ENCODE measurements at regions of chrX and their contacts with region 1.

Region 1: GRCh38 chrX:49120099-49120498 is 3.4 kb downstream of the GPKOW start:
- DNase-seq: no peak
- H3K4me3 Mint-ChIP-seq: peak overlapping the region; percentile 69
- H3K27ac Mint-ChIP-seq: peak overlapping the region; percentile 71
- H3K4me1 Mint-ChIP-seq: peaks cover 40% of the 10 kb centered on the region
- H3K27me3 Mint-ChIP-seq: no peaks in the 10 kb centered on the region

Region 2: GRCh38 chrX:49079489-49080428 is 40.3 kb before region 1 on chrX and contains the start of gene WDR45:
- intact Hi-C with region 1: loop called (anchors 2 kb)
- DNase-seq: peak; percentile 68
- H3K4me3 Mint-ChIP-seq: peak within 1 kb of the TSS; percentile 99
- H3K27ac Mint-ChIP-seq: peak within 1 kb of the TSS; percentile 93
- H3K4me1 Mint-ChIP-seq: peaks cover 12% of the 10 kb centered on the region
- H3K27me3 Mint-ChIP-seq: no peaks in the 10 kb centered on the region
- total RNA-seq, gene WDR45: 49.1 and 53.0 TPM in 2 replicates

Region 3: GRCh38 chrX:49155900-49156837 is 36.1 kb after region 1 on chrX:
- intact Hi-C with region 1: loop called (anchors 1 kb)
- DNase-seq: peak; percentile 83
- H3K4me3 Mint-ChIP-seq: peak overlapping the region; percentile 89
- H3K27ac Mint-ChIP-seq: peak overlapping the region; percentile 96
- H3K4me1 Mint-ChIP-seq: peaks cover 11% of the 10 kb centered on the region
- H3K27me3 Mint-ChIP-seq: no peaks in the 10 kb centered on the region

Region 4: GRCh38 chrX:49163555-49164419 is 43.7 kb after region 1 on chrX:
- intact Hi-C with region 1: loop called (anchors 2 kb)
- DNase-seq: peak; percentile 77
- H3K4me3 Mint-ChIP-seq: peak overlapping the region; percentile 69
- H3K27ac Mint-ChIP-seq: peak overlapping the region; percentile 72
- H3K4me1 Mint-ChIP-seq: peaks cover 23% of the 10 kb centered on the region
- H3K27me3 Mint-ChIP-seq: peaks cover 4% of the 10 kb centered on the region

Region 5: DNA sequence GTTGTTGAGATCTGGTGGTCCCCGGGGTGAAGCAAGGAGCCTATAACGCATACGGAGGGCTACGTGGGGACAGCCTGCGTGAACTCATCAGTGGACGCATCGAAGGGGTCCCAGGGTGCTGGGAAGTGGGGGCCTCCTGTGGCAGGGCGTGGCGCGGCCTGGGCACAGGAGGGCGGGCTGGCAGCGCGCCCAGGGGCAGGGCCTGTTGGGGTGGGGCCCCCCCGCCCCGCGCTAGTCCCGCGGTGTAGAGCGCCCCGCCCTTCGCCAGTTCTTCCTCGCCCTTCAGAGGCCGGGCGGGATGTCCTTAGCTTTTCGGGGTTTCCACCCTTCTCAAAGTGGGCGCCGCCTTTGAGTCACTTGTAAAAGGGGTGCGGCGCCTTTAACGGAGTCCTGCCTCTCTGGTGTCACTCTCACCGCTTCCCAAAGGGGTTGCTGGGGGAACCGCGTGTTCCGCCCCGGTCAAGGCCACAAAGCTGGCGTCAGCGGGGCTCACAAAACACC is 52.2 kb after region 1 on chrX:
- intact Hi-C with region 1: loop called (anchors 1 kb)
- DNase-seq: peak; percentile 55
- H3K4me3 Mint-ChIP-seq: peak overlapping the region; percentile 88
- H3K27ac Mint-ChIP-seq: peak overlapping the region; percentile 84
- H3K4me1 Mint-ChIP-seq: peaks cover 15% of the 10 kb centered on the region
- H3K27me3 Mint-ChIP-seq: peaks cover under 1% of the 10 kb centered on the region

Measured in activated T-helper 1 cell treated with anti-CD3 and anti-CD28 coated beads, Interleukin-12 subunit alpha, Interleukin-12 subunit beta, Interleukin-2, Interleukin-4 antibody, amounts not matched to agents 30 ng/mL and 10 ng/mL and 1 ng/mL, durations not matched to agents 14 hours and 24 hours and 36 hours (primary cell).